ENCODE measurements at regions of chrX and their contacts with region 1.

Region 1: GRCh38 chrX:148380650-148381561 is 119.5 kb upstream of the AFF2 start:
- DNase-seq: peak in 8 of 9 donors; percentile 5 to 33 (median 17)
- ATAC-seq: peak; percentile 86
- H3K4me3 ChIP-seq: peak overlapping the region; percentile 36
- H3K4me3 Mint-ChIP-seq: peak overlapping the region; percentile 66 to 88 (median 83)
- H3K27ac ChIP-seq: peak overlapping the region; percentile 58
- H3K27ac Mint-ChIP-seq: peak overlapping the region; percentile 73 to 93 (median 87)
- H3K4me1 ChIP-seq: peaks cover 14 to 20% of the 10 kb centered on the region in 2 donors
- H3K4me1 Mint-ChIP-seq: peaks cover 10 to 38% (median 30%) of the 10 kb centered on the region in 7 donors
- H3K27me3 ChIP-seq: no peaks in the 10 kb centered on the region
- H3K27me3 Mint-ChIP-seq: no peaks in the 10 kb centered on the region

Region 2: DNA sequence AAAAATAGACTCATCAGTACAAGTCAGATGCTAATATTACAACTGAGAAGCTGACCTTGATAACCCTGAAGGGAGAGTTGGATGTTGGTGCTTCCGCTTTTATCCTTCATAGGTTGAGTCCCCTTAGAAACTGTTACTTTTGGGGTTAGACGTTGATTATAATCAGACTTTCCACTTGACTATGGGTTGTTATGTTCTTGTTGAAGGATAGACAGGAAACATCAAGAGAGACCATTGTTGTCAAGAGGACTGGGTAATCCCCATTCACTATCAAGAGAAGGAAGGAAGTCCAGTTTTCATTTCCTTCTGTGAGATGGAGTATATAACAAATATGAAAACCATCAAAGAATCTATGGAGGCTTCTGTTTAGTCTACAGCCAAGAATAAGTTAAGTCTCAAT is 110.4 kb before region 1 on chrX:
- CTCF ChIA-PET with region 1: no interaction called
- POLR2A ChIA-PET with region 1: no interaction called
- intact Hi-C with region 1: loop called (anchors 5 kb)
- DNase-seq: peak in 5 of 9 donors; percentile 2 to 40 (median 6)
- ATAC-seq: peak; percentile 57
- H3K4me3 ChIP-seq: no peak overlapping the region
- H3K4me3 Mint-ChIP-seq: peak overlapping the region in 4 of 10 donors; percentile 8 to 29 (median 18)
- H3K27ac ChIP-seq: no peak overlapping the region
- H3K27ac Mint-ChIP-seq: peak overlapping the region in 4 of 9 donors; percentile 9 to 55 (median 24)
- H3K4me1 ChIP-seq: peaks cover 0 to 8% of the 10 kb centered on the region in 2 donors
- H3K4me1 Mint-ChIP-seq: peaks cover 2 to 44% (median 28%) of the 10 kb centered on the region in 7 donors
- H3K27me3 ChIP-seq: no peaks in the 10 kb centered on the region
- H3K27me3 Mint-ChIP-seq: no peaks in the 10 kb centered on the region

Region 3: GRCh38 chrX:148282504-148282903 is 98.4 kb before region 1 on chrX:
- CTCF ChIA-PET with region 1: no interaction called
- POLR2A ChIA-PET with region 1: no interaction called
- intact Hi-C with region 1: loop called (anchors 1 to 5 kb)
- DNase-seq: peak in 6 of 9 donors; percentile 5 to 39 (median 14)
- ATAC-seq: no peak
- H3K4me3 ChIP-seq: no peak overlapping the region
- H3K4me3 Mint-ChIP-seq: peak overlapping the region in 7 of 10 donors; percentile 1 to 60 (median 46)
- H3K27ac ChIP-seq: no peak overlapping the region
- H3K27ac Mint-ChIP-seq: peak overlapping the region; percentile 24 to 88 (median 55)
- H3K4me1 ChIP-seq: peaks cover 0 to 28% of the 10 kb centered on the region in 2 donors
- H3K4me1 Mint-ChIP-seq: peaks cover 14 to 50% (median 39%) of the 10 kb centered on the region in 7 donors
- H3K27me3 ChIP-seq: no peaks in the 10 kb centered on the region
- H3K27me3 Mint-ChIP-seq: no peaks in the 10 kb centered on the region

Region 4: GRCh38 chrX:148310426-148311165 is 70.3 kb before region 1 on chrX:
- CTCF ChIA-PET with region 1: no interaction called
- POLR2A ChIA-PET with region 1: no interaction called
- intact Hi-C with region 1: loop called (anchors 1 kb)
- DNase-seq: peak in 8 of 9 donors; percentile 28 to 86 (median 76)
- ATAC-seq: peak; percentile 93
- H3K4me3 ChIP-seq: no peak overlapping the region
- H3K4me3 Mint-ChIP-seq: peak overlapping the region; percentile 48 to 83 (median 76)
- H3K27ac ChIP-seq: no peak overlapping the region
- H3K27ac Mint-ChIP-seq: peak overlapping the region; percentile 64 to 94 (median 85)
- H3K4me1 ChIP-seq: peaks cover 20 to 23% of the 10 kb centered on the region in 2 donors
- H3K4me1 Mint-ChIP-seq: peaks cover 18 to 51% (median 45%) of the 10 kb centered on the region in 7 donors
- H3K27me3 ChIP-seq: no peaks in the 10 kb centered on the region
- H3K27me3 Mint-ChIP-seq: no peaks in the 10 kb centered on the region

Region 5: DNA sequence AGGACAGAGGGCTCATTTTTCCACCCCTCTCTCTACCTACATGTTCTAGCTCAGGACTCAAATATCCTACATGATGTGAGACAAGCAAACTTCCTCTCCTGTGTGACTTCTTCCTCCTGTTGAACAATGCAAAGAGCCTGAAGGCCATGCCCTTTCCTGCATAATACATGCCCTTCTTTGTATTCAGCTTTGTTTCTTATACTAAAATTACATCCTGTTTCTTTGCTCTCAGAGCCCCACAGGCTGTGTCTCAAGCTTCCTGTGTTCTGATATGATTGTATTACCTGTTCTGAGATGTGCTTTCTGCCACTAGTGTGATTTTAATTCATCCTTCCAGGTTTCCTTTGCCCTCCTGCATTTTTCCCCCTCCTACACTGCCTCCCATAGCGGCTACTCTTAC is 46.9 kb before region 1 on chrX:
- CTCF ChIA-PET with region 1: no interaction called
- POLR2A ChIA-PET with region 1: interaction called, 3 read pairs
- intact Hi-C with region 1: loop called (anchors 1 to 2 kb)
- DNase-seq: peak in 7 of 9 donors; percentile 8 to 72 (median 47)
- ATAC-seq: peak; percentile 73
- H3K4me3 ChIP-seq: no peak overlapping the region
- H3K4me3 Mint-ChIP-seq: peak overlapping the region; percentile 18 to 81 (median 70)
- H3K27ac ChIP-seq: peak overlapping the region; percentile 58
- H3K27ac Mint-ChIP-seq: peak overlapping the region; percentile 85 to 98 (median 92)
- H3K4me1 ChIP-seq: peaks cover 11 to 45% of the 10 kb centered on the region in 2 donors
- H3K4me1 Mint-ChIP-seq: peaks cover 17 to 93% (median 74%) of the 10 kb centered on the region in 7 donors
- H3K27me3 ChIP-seq: no peaks in the 10 kb centered on the region
- H3K27me3 Mint-ChIP-seq: no peaks in the 10 kb centered on the region

Region 6: DNA sequence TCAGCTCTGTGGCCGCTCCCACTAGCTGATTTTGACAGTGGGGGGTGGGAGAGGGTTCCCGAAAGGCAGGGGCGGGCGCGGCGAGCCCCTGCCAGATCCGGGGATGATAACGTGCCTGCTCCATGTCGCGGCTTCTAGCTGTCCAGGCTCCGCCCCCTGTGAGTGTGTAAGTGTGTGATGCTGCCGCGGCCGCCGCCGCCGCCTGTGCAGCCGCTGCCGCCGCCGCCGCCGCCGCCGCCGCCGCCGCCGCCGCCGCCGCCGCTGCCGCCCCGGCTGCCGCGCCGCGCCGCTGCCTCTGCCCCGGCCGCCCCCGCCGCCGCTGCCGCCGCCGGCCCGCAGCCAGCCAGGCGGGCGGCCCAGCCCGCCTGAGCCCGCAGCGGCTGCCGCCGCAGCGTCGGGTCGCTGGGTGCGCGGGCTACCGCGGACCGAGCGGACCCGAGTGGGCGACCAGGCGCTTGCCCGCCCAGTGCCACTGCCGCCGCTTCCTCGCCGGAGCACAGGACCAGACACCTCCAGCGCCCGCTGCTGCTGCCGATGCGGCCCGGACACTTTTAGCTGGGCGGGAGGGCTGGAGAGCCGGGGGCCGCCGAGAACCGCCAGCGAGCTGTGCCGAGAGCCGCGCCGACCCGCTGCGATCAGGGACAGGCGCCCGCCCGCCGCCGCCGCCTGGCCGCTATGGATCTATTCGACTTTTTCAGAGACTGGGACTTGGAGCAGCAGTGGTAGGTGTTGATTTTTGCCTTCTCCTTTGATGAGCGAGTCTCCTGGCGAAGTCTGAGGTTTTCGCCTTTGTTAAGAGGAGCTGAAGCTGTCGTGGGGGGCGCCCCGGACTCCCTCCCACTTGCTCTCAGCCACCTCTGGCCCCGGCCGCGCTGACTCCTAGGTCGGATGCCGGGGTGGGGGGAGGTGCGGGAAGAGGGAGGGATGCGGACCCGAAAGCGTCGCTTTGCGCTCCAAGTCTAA is 119.8 kb after region 1 on chrX and contains the start of gene AFF2:
- CTCF ChIA-PET with region 1: no interaction called
- POLR2A ChIA-PET with region 1: no interaction called
- intact Hi-C with region 1: loop called in 1 of 2 experiments (anchors 1 kb)
- DNase-seq: peak in 8 of 9 donors; percentile 18 to 46 (median 30)
- ATAC-seq: peak; percentile 73
- H3K4me3 ChIP-seq: peak within 1 kb of the TSS; percentile 38
- H3K4me3 Mint-ChIP-seq: peak within 1 kb of the TSS; percentile 79 to 92 (median 86)
- H3K27ac ChIP-seq: no peak within 1 kb of the TSS
- H3K27ac Mint-ChIP-seq: no peak within 1 kb of the TSS
- H3K4me1 ChIP-seq: no peaks in the 10 kb centered on the region
- H3K4me1 Mint-ChIP-seq: peaks cover 2 to 30% (median 13%) of the 10 kb centered on the region in 7 donors
- H3K27me3 ChIP-seq: no peaks in the 10 kb centered on the region
- H3K27me3 Mint-ChIP-seq: peaks cover 0 to 19% (median 0%) of the 10 kb centered on the region in 5 donors
- total RNA-seq, gene AFF2: 2.7 to 6.0 (median 4.7) TPM

Region 7: DNA sequence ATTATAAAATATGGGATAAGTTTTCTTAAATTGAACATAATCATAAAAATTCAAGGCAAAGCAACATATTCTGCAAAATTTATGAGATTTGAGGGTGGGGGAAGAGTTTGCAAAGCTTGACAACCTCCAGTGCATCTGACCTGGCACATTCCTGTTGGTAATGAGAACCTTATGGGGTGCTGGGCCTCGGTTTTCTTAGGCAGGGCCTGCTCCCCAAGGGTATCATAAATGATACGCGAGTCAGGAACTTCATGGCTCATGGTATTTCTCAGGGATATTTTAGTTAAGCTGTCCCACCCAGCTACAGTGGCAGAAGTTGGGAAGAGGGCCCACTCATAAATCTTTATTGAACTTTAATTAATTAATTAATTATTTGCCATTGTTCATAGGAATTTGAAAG is 132.8 kb after region 1 on chrX:
- CTCF ChIA-PET with region 1: no interaction called
- POLR2A ChIA-PET with region 1: no interaction called
- intact Hi-C with region 1: no loop called
- DNase-seq: no peak
- ATAC-seq: no peak
- H3K4me3 ChIP-seq: no peak overlapping the region
- H3K4me3 Mint-ChIP-seq: no peak overlapping the region
- H3K27ac ChIP-seq: no peak overlapping the region
- H3K27ac Mint-ChIP-seq: no peak overlapping the region
- H3K4me1 ChIP-seq: no peaks in the 10 kb centered on the region
- H3K4me1 Mint-ChIP-seq: no peaks in the 10 kb centered on the region
- H3K27me3 ChIP-seq: no peaks in the 10 kb centered on the region
- H3K27me3 Mint-ChIP-seq: no peaks in the 10 kb centered on the region

Region 8: GRCh38 chrX:148940411-148940996 is 559.6 kb after region 1 on chrX:
- CTCF ChIA-PET with region 1: no interaction called
- POLR2A ChIA-PET with region 1: no interaction called
- intact Hi-C with region 1: no loop called
- DNase-seq: no peak
- ATAC-seq: peak; percentile 57
- H3K4me3 ChIP-seq: no peak overlapping the region
- H3K4me3 Mint-ChIP-seq: no peak overlapping the region
- H3K27ac ChIP-seq: no peak overlapping the region
- H3K27ac Mint-ChIP-seq: no peak overlapping the region
- H3K4me1 ChIP-seq: no peaks in the 10 kb centered on the region
- H3K4me1 Mint-ChIP-seq: no peaks in the 10 kb centered on the region
- H3K27me3 ChIP-seq: no peaks in the 10 kb centered on the region
- H3K27me3 Mint-ChIP-seq: no peaks in the 10 kb centered on the region

Measured in naive thymus-derived CD4-positive, alpha-beta T cell (primary cell).